B cell (primary cell): ENCODE measurements at regions of chr19 and their contacts with region 1.

Region 1: DNA sequence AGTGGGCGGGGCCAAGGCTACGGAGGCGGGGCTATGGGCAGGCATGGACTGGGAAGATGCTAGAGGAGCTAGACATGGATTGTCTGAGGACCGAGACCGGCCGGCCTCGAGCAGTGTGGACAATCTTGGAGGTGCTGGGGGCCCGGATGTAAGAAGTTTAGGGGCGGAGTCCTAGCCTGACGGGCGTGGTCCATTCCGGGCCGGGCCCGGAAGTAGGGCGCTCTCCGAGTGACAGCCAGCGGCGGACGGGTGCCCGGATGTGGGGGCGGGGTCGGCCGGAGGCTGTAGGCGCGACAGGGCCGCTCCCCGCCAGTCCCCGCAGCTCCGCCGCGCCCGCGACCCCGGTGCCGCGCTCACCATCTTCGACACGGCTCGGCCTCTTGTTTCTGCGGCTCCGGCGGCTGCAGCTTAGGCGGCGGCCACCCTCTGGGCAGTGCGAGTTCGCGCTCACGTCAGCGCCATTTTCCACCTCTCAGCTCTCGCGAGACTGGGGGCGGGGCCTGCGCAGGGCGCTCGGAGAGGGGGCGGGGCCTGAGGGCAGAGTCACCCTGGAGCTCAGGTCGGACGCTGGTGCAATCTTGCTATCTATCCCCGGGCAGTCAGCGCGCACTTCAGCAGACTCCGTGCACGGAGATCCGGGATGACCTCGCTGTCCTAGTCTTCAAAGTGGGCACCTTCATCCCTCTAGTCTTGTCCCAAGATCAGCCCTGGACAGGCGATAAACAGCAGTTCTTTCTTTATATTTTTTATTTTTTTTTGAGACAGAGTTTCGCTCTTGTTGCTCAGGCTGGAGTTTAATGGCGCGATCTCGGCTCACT is at the start of gene ZNF414:
- DNase-seq: peak; percentile 99
- ATAC-seq: peak; percentile 91
- H3K4me3 ChIP-seq: peak within 1 kb of the TSS; percentile 46 to 80 (median 74)
- H3K4me3 Mint-ChIP-seq: peak within 1 kb of the TSS; percentile 93
- H3K27ac ChIP-seq: peak within 1 kb of the TSS; percentile 87 to 97
- H3K27ac Mint-ChIP-seq: peak within 1 kb of the TSS; percentile 98
- H3K4me1 ChIP-seq: peaks cover 17 to 36% of the 10 kb centered on the region in 2 donors
- H3K4me1 Mint-ChIP-seq: peaks cover 26% of the 10 kb centered on the region
- H3K27me3 ChIP-seq: no peaks in the 10 kb centered on the region
- H3K27me3 Mint-ChIP-seq: no peaks in the 10 kb centered on the region
- CTCF ChIP-seq: no peak
- total RNA-seq, gene ZNF414: 40.7 and 43.8 TPM in 2 replicates

Region 2: GRCh38 chr19:8005534-8006256 is 508.2 kb before region 1 on chr19 and contains the start of gene ELAVL1:
- CTCF ChIA-PET with region 1: no interaction called
- POLR2A ChIA-PET with region 1: no interaction called
- intact Hi-C with region 1: loop called (anchors 5 kb)
- DNase-seq: peak; percentile 93
- ATAC-seq: peak; percentile 92
- H3K4me3 ChIP-seq: peak within 1 kb of the TSS; percentile 74 to 88 (median 86)
- H3K4me3 Mint-ChIP-seq: peak within 1 kb of the TSS; percentile 95
- H3K27ac ChIP-seq: peak within 1 kb of the TSS; percentile 62 to 87
- H3K27ac Mint-ChIP-seq: peak within 1 kb of the TSS; percentile 85
- H3K4me1 ChIP-seq: peaks cover 25 to 42% of the 10 kb centered on the region in 2 donors
- H3K4me1 Mint-ChIP-seq: peaks cover 37% of the 10 kb centered on the region
- H3K27me3 ChIP-seq: no peaks in the 10 kb centered on the region
- H3K27me3 Mint-ChIP-seq: no peaks in the 10 kb centered on the region
- CTCF ChIP-seq: no peak
- total RNA-seq, gene ELAVL1: 58.3 and 63.5 TPM in 2 replicates

Region 3: GRCh38 chr19:8355631-8356402 is 158.1 kb before region 1 on chr19:
- CTCF ChIA-PET with region 1: interaction called, 13 read pairs
- POLR2A ChIA-PET with region 1: no interaction called
- intact Hi-C with region 1: no loop called
- DNase-seq: no peak
- ATAC-seq: no peak
- H3K4me3 ChIP-seq: no peak overlapping the region
- H3K4me3 Mint-ChIP-seq: no peak overlapping the region
- H3K27ac ChIP-seq: no peak overlapping the region
- H3K27ac Mint-ChIP-seq: no peak overlapping the region
- H3K4me1 ChIP-seq: peaks cover 0 to 3% of the 10 kb centered on the region in 2 donors
- H3K4me1 Mint-ChIP-seq: peaks cover 3% of the 10 kb centered on the region
- H3K27me3 ChIP-seq: peaks cover 0 to 20% (median 4%) of the 10 kb centered on the region in 4 experiments
- H3K27me3 Mint-ChIP-seq: peaks cover 18% of the 10 kb centered on the region
- CTCF ChIP-seq: no peak

Region 4: DNA sequence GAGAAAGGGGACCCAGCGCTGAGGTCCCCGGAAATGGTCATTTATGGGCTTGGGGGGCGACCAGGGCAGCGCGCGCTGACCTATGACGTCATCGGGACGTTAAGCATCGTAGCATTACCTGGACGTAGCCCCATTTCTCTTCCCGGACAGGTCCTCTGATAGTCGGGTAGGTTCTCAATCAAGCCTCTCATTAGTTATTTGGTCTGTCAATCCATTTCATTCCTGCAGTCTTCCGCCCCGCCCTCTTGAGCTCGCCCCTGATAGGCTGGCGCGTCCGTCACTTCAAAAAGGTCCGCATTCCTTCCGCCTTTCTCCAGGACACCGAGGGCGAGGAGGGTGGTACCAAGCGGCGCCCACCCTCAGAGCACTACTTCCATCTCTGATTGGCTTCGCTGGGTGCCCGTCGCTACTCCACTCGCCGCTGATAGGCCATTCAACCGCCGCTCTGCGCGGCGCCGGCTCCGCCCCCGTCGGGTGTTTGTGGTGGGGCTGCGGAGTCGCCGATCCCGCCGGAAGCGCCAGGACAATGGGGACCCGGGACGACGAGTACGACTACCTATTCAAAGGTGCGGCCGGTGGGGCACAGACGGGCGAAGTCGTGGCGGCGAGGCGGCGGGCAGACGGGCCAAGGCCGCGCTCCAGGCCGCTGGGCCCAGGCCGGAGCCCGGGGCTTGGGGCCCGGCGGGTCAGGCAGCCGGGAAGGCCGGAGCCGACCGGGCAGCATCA is 123.8 kb before region 1 on chr19 and contains the start of gene RAB11B:
- CTCF ChIA-PET with region 1: no interaction called
- POLR2A ChIA-PET with region 1: interaction called, 3 read pairs
- intact Hi-C with region 1: loop called (anchors 1 kb)
- DNase-seq: peak; percentile 100
- ATAC-seq: peak; percentile 86
- H3K4me3 ChIP-seq: peak within 1 kb of the TSS; percentile 54 to 89 (median 82)
- H3K4me3 Mint-ChIP-seq: peak within 1 kb of the TSS; percentile 95
- H3K27ac ChIP-seq: peak within 1 kb of the TSS; percentile 70 to 96
- H3K27ac Mint-ChIP-seq: peak within 1 kb of the TSS; percentile 98
- H3K4me1 ChIP-seq: peaks cover 10 to 20% of the 10 kb centered on the region in 2 donors
- H3K4me1 Mint-ChIP-seq: peaks cover 29% of the 10 kb centered on the region
- H3K27me3 ChIP-seq: no peaks in the 10 kb centered on the region
- H3K27me3 Mint-ChIP-seq: no peaks in the 10 kb centered on the region
- CTCF ChIP-seq: no peak
- total RNA-seq, gene RAB11B: 126 and 130 TPM in 2 replicates

Region 5: GRCh38 chr19:8412783-8413628 is 100.9 kb before region 1 on chr19 and contains the start of gene MARCHF2:
- CTCF ChIA-PET with region 1: interaction called, 10 read pairs
- POLR2A ChIA-PET with region 1: interaction called, 12 read pairs
- intact Hi-C with region 1: loop called (anchors 1 kb)
- DNase-seq: peak; percentile 98
- ATAC-seq: peak; percentile 99
- H3K4me3 ChIP-seq: peak within 1 kb of the TSS; percentile 52 to 82 (median 65)
- H3K4me3 Mint-ChIP-seq: peak within 1 kb of the TSS; percentile 70
- H3K27ac ChIP-seq: peak within 1 kb of the TSS in 1 of 2 donors; percentile 59
- H3K27ac Mint-ChIP-seq: peak within 1 kb of the TSS; percentile 16
- H3K4me1 ChIP-seq: peaks cover 5 to 9% of the 10 kb centered on the region in 2 donors
- H3K4me1 Mint-ChIP-seq: peaks cover 11% of the 10 kb centered on the region
- H3K27me3 ChIP-seq: no peaks in the 10 kb centered on the region
- H3K27me3 Mint-ChIP-seq: no peaks in the 10 kb centered on the region
- CTCF ChIP-seq: peak; percentile 76
- total RNA-seq, gene MARCHF2: 22.9 and 24.8 TPM in 2 replicates

Region 6: DNA sequence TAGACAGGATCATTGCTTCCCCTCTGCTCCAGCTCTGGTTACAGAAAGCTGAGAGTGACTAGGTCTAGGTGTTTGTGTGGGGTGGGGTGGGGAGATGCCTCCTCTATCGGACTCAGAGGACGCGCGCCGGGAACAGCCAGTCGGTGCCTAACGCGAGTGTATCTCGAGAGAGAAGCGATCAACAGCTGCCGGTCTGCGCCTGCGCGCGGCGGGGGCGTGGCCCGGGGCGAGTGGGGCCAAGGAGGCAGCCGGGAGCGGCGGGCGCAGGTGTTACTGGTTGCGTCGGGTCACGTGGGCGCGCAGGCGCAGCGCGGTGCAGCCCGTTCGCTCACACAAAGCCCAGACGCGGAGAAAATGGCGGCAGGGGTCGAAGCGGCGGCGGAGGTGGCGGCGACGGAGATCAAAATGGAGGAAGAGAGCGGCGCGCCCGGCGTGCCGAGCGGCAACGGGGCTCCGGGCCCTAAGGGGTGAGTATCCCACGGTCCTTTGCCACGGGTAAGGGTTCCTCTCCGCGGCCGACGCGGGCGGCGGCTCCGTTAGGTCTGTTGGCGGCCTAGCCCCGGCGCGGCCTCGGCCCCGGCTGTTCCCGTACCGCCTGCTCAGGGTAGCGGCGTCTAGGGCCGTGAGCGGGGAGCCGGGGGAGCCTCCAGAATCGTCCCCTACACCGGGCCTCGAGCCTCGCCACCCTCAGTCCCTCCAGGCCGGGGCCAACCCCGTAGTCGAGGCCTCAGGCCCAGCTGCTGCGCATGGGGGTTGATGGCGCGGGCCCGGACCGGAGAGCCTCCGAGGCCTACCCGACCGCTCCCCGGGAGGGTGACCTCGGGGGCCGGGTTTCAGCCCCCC is 69.0 kb before region 1 on chr19 and contains the start of gene HNRNPM:
- CTCF ChIA-PET with region 1: no interaction called
- POLR2A ChIA-PET with region 1: interaction called, 10 read pairs
- intact Hi-C with region 1: loop called (anchors 1 kb)
- DNase-seq: peak; percentile 99
- ATAC-seq: peak; percentile 92
- H3K4me3 ChIP-seq: peak within 1 kb of the TSS; percentile 65 to 97 (median 97)
- H3K4me3 Mint-ChIP-seq: peak within 1 kb of the TSS; percentile 94
- H3K27ac ChIP-seq: peak within 1 kb of the TSS; percentile 89 to 97
- H3K27ac Mint-ChIP-seq: peak within 1 kb of the TSS; percentile 98
- H3K4me1 ChIP-seq: peaks cover 38 to 47% of the 10 kb centered on the region in 2 donors
- H3K4me1 Mint-ChIP-seq: peaks cover 37% of the 10 kb centered on the region
- H3K27me3 ChIP-seq: no peaks in the 10 kb centered on the region
- H3K27me3 Mint-ChIP-seq: no peaks in the 10 kb centered on the region
- CTCF ChIP-seq: no peak
- total RNA-seq, gene HNRNPM: 207 and 221 TPM in 2 replicates

Region 7: GRCh38 chr19:8473648-8474476 is 40.0 kb before region 1 on chr19:
- CTCF ChIA-PET with region 1: interaction called, 4 read pairs
- POLR2A ChIA-PET with region 1: interaction called, 5 read pairs
- intact Hi-C with region 1: loop called (anchors 2 kb)
- DNase-seq: peak; percentile 79
- ATAC-seq: peak; percentile 84
- H3K4me3 ChIP-seq: peak overlapping the region in 2 of 5 experiments; percentile 0 to 7
- H3K4me3 Mint-ChIP-seq: peak overlapping the region; percentile 71
- H3K27ac ChIP-seq: peak overlapping the region; percentile 56 to 77
- H3K27ac Mint-ChIP-seq: peak overlapping the region; percentile 88
- H3K4me1 ChIP-seq: peaks cover 34 to 45% of the 10 kb centered on the region in 2 donors
- H3K4me1 Mint-ChIP-seq: peaks cover 50% of the 10 kb centered on the region
- H3K27me3 ChIP-seq: no peaks in the 10 kb centered on the region
- H3K27me3 Mint-ChIP-seq: no peaks in the 10 kb centered on the region
- CTCF ChIP-seq: no peak